Esophagus muscularis mucosa (tissue), 4 donors: ENCODE measurements at regions of chr7 and their contacts with region 1.

Region 1: DNA sequence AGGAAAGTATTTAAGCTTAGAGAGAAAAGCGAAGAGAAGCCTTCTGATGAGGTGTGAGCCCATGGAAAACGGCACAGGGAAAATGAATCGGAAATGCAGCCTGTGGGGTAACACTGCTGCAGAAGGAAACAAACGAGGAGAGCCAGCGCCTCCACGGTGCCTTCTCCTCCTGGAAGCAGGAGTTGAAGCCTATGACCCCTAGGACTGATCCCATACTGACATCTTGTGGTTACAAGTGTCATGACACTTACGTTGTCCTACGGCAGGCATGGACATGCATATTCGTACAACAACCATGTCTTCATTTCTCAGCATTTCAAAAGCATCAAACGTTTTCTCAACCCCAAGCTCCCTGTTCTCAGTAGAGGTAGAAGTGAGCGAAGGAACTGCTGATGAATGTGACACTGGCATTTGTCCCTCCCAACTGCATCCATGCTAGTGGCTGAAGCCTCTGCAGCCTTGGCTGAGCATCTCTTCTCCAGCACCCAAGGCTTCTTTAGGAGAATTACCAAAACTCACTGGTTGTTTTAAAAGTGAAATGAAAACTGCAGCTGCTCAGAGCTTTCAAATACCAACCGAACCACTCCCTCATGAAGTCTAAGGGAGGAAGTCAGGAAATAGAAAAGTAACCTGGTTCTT is 160.2 kb downstream of the JAZF1 start:
- DNase-seq: no peak
- H3K4me3 ChIP-seq: no peak overlapping the region
- H3K27ac ChIP-seq: no peak overlapping the region
- H3K4me1 ChIP-seq: peaks cover 29 to 64% (median 55%) of the 10 kb centered on the region in 4 donors
- H3K27me3 ChIP-seq: no peaks in the 10 kb centered on the region
- CTCF ChIP-seq: peak; percentile 81 to 87 (median 86)
- EP300 ChIP-seq: no peak
- POLR2A ChIP-seq: no peak

Region 2: GRCh38 chr7:27810186-27810585 is 210.2 kb before region 1 on chr7:
- intact Hi-C with region 1: loop called (anchors 10 kb)
- DNase-seq: no peak
- H3K4me3 ChIP-seq: no peak overlapping the region
- H3K27ac ChIP-seq: no peak overlapping the region
- H3K4me1 ChIP-seq: peaks cover 6 to 18% (median 13%) of the 10 kb centered on the region in 4 donors
- H3K27me3 ChIP-seq: no peaks in the 10 kb centered on the region
- CTCF ChIP-seq: no peak
- EP300 ChIP-seq: no peak
- POLR2A ChIP-seq: no peak

Region 3: DNA sequence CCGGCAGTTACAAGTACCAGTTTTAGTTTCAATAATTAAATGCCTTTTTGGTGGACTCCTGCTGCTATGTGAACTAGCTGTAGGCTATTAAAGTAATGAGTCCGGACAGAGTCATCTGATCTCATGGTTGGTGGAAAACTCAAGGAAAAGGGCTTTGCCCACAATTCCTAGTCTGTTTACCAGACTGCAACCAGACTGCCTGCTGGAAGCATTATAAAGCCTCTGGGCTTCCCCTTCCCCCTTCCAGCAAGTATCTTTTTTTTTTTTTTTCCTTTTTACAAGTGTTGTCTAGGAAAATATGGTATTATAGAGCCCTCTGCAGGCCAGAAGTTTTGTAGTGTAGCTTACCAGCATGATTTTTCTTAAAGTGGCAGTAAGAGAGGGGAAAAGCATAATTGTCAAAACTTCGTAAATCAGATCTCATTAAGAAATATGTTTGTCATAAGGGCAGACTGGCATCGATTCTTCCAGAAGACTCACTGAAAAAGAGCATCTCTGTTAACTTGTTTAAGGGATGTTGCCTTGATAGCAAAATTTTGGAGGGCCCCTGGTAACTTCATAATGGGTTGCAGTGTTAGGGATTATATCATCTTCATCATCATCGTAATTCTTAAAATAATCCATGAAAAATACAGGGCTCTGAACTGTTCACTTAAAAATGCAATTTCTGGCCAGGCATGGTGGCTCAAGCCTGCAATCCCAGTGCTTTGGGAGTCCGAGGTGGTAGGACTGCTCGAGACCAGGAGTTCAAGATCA is 99.2 kb before region 1 on chr7:
- intact Hi-C with region 1: loop called (anchors 5 kb)
- DNase-seq: no peak
- H3K4me3 ChIP-seq: no peak overlapping the region
- H3K27ac ChIP-seq: no peak overlapping the region
- H3K4me1 ChIP-seq: peaks cover 12 to 25% (median 18%) of the 10 kb centered on the region in 4 donors
- H3K27me3 ChIP-seq: no peaks in the 10 kb centered on the region
- CTCF ChIP-seq: peak; percentile 35 to 48 (median 45)
- EP300 ChIP-seq: no peak
- POLR2A ChIP-seq: no peak